CD4-positive, alpha-beta memory T cell (primary cell): ENCODE measurements at regions of chr17 and their contacts with region 1.

Region 1: GRCh38 chr17:40443583-40444327 is 505 bp downstream of the IGFBP4 start:
- DNase-seq: peak; percentile 55 to 69 (median 62)
- H3K4me3 ChIP-seq: peak overlapping the region; percentile 67 to 73
- H3K4me3 Mint-ChIP-seq: peak overlapping the region; percentile 80 to 97 (median 86)
- H3K27ac ChIP-seq: peak overlapping the region; percentile 37
- H3K27ac Mint-ChIP-seq: peak overlapping the region; percentile 85 to 97 (median 93)
- H3K4me1 ChIP-seq: peaks cover 48% of the 10 kb centered on the region
- H3K4me1 Mint-ChIP-seq: peaks cover 23 to 51% (median 35%) of the 10 kb centered on the region in 4 donors
- H3K27me3 ChIP-seq: no peaks in the 10 kb centered on the region
- H3K27me3 Mint-ChIP-seq: peaks cover 2 to 6% of the 10 kb centered on the region in 2 donors

Region 2: GRCh38 chr17:40399185-40399584 is 44.6 kb before region 1 on chr17:
- CTCF ChIA-PET with region 1: interaction called, 8 read pairs
- POLR2A ChIA-PET with region 1: interaction called, 5 read pairs
- intact Hi-C with region 1: loop called (anchors 1 kb)
- DNase-seq: peak in 4 of 5 donors; percentile 40 to 66 (median 57)
- H3K4me3 ChIP-seq: no peak overlapping the region
- H3K4me3 Mint-ChIP-seq: no peak overlapping the region
- H3K27ac ChIP-seq: no peak overlapping the region
- H3K27ac Mint-ChIP-seq: peak overlapping the region in 2 of 7 donors; percentile 82 to 84
- H3K4me1 ChIP-seq: peaks cover 21% of the 10 kb centered on the region
- H3K4me1 Mint-ChIP-seq: peaks cover 16 to 24% (median 21%) of the 10 kb centered on the region in 4 donors
- H3K27me3 ChIP-seq: no peaks in the 10 kb centered on the region
- H3K27me3 Mint-ChIP-seq: no peaks in the 10 kb centered on the region

Region 3: GRCh38 chr17:40427002-40427491 is 16.7 kb before region 1 on chr17:
- CTCF ChIA-PET with region 1: interaction called, 11 read pairs
- POLR2A ChIA-PET with region 1: interaction called, 12 read pairs
- intact Hi-C with region 1: no loop called
- DNase-seq: peak in 3 of 5 donors; percentile 34 to 45 (median 35)
- H3K4me3 ChIP-seq: no peak overlapping the region
- H3K4me3 Mint-ChIP-seq: peak overlapping the region; percentile 10 to 72 (median 34)
- H3K27ac ChIP-seq: peak overlapping the region; percentile 33
- H3K27ac Mint-ChIP-seq: peak overlapping the region in 6 of 7 donors; percentile 4 to 70 (median 21)
- H3K4me1 ChIP-seq: peaks cover 29% of the 10 kb centered on the region
- H3K4me1 Mint-ChIP-seq: peaks cover 27 to 29% (median 28%) of the 10 kb centered on the region in 4 donors
- H3K27me3 ChIP-seq: no peaks in the 10 kb centered on the region
- H3K27me3 Mint-ChIP-seq: no peaks in the 10 kb centered on the region

Region 4: GRCh38 chr17:40480501-40481003 is 36.8 kb after region 1 on chr17:
- CTCF ChIA-PET with region 1: interaction called, 15 read pairs
- POLR2A ChIA-PET with region 1: interaction called, 7 read pairs
- intact Hi-C with region 1: loop called (anchors 5 kb)
- DNase-seq: peak; percentile 92 to 96 (median 95)
- H3K4me3 ChIP-seq: peak overlapping the region in 1 of 2 donors; percentile 26
- H3K4me3 Mint-ChIP-seq: peak overlapping the region; percentile 49 to 78 (median 73)
- H3K27ac ChIP-seq: peak overlapping the region; percentile 83
- H3K27ac Mint-ChIP-seq: peak overlapping the region; percentile 97 to 100 (median 99)
- H3K4me1 ChIP-seq: peaks cover 91% of the 10 kb centered on the region
- H3K4me1 Mint-ChIP-seq: peaks cover 31 to 83% (median 55%) of the 10 kb centered on the region in 4 donors
- H3K27me3 ChIP-seq: no peaks in the 10 kb centered on the region
- H3K27me3 Mint-ChIP-seq: no peaks in the 10 kb centered on the region

Region 5: GRCh38 chr17:40536295-40537171 is 92.8 kb after region 1 on chr17:
- CTCF ChIA-PET with region 1: interaction called, 192 read pairs
- POLR2A ChIA-PET with region 1: interaction called, 75 read pairs
- intact Hi-C with region 1: loop called (anchors 1 kb)
- DNase-seq: no peak
- H3K4me3 ChIP-seq: no peak overlapping the region
- H3K4me3 Mint-ChIP-seq: peak overlapping the region in 3 of 8 donors; percentile 6 to 67 (median 51)
- H3K27ac ChIP-seq: no peak overlapping the region
- H3K27ac Mint-ChIP-seq: peak overlapping the region; percentile 65 to 100 (median 88)
- H3K4me1 ChIP-seq: peaks cover 90% of the 10 kb centered on the region
- H3K4me1 Mint-ChIP-seq: peaks cover 68 to 97% (median 84%) of the 10 kb centered on the region in 4 donors
- H3K27me3 ChIP-seq: no peaks in the 10 kb centered on the region
- H3K27me3 Mint-ChIP-seq: peaks cover 0 to 6% of the 10 kb centered on the region in 2 donors